ENCODE measurements at regions of chr20 and their contacts with region 1.

Region 1: GRCh38 chr20:33719989-33720709 is at the start of gene PXMP4:
- DNase-seq: peak; percentile 98
- CTCF ChIP-seq: no peak

Region 2: DNA sequence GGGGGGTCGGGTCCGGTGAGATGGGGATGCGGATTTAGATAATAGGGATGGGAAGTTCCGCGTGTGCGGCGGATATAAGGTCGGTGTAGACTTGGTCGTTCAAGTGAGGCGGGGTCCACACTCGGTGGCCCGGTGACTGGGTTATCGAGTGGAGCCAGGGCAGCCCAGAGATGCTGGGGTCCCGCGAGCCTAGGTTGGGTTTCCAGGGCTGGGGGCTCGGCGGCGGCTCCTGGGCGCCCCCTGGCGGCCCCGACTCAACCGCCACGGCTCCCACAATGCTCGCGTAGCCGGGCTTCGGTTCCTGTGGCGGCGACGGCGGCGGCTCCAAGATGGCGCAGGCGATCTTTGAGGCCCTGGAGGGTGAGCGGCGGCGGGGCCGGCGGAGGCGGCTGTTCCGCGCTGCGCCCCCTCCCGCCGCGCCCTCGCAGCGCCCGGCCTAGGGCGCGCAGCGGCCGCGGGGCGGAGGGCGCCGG is 11.6 kb after region 1 on chr20 and contains the start of gene ZNF341:
- CTCF ChIA-PET with region 1: interaction called, 14 read pairs
- POLR2A ChIA-PET with region 1: interaction called, 3 read pairs
- DNase-seq: peak; percentile 89
- CTCF ChIP-seq: peak; percentile 88

Measured in GM10248 (cell line).